Caco-2 (cell line): ENCODE measurements at regions of chr6 and their contacts with region 1.

Region 1: DNA sequence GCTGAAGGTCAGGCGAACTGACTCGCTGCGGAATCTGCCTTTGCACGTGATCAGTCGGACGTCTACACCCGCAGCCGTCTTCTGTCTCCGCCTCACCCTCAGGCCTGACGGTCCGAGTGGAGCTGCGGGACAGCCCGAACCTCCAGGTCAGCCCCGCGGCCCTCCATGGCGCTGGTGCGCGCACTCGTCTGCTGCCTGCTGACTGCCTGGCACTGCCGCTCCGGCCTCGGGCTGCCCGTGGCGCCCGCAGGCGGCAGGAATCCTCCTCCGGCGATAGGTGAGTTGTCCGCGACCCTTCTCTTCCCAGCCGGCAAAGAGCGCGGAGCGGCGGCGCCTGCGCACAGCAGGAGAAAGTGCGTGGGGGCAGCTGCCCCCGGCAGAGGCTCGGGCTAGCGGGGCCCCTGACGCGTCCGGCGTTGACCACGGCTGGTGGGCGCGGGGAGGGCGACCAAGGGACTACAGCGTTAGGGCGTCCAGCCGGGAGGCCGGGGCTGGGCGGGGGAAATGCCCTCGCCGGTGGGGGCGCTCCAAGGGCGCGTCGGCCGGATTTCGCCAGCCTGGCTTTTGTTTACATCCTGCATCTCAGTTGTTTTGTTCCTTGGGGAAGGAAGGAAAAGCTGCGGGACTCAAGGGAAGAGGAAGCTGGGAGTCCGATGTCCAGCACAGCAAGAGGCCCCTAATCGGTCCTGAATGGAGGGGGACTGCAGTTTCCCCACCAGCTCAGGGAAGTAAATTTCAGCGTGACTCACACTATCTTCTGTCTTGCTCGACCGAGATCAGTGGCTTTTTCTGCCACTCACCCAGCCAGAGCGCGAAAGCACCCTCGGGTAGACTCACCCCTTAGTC is at the start of gene SMPDL3A:
- DNase-seq: peak; percentile 78 to 84
- H3K4me3 ChIP-seq: peak within 1 kb of the TSS; percentile 73
- H3K4me3 Mint-ChIP-seq: peak within 1 kb of the TSS; percentile 96
- H3K27ac Mint-ChIP-seq: peak within 1 kb of the TSS; percentile 92
- H3K4me1 ChIP-seq: peaks cover 51% of the 10 kb centered on the region
- H3K4me1 Mint-ChIP-seq: peaks cover 30% of the 10 kb centered on the region
- H3K27me3 ChIP-seq: no peaks in the 10 kb centered on the region
- H3K27me3 Mint-ChIP-seq: no peaks in the 10 kb centered on the region
- CTCF ChIP-seq: peak; percentile 50 to 61
- total RNA-seq, gene SMPDL3A: 20.4 and 21.7 TPM in 2 replicates

Region 2: GRCh38 chr6:122530440-122531046 is 258.9 kb before region 1 on chr6:
- CTCF ChIA-PET with region 1: no interaction called
- POLR2A ChIA-PET with region 1: no interaction called
- intact Hi-C with region 1: no loop called
- DNase-seq: peak; percentile 38 to 66
- H3K4me3 ChIP-seq: no peak overlapping the region
- H3K4me3 Mint-ChIP-seq: no peak overlapping the region
- H3K27ac Mint-ChIP-seq: no peak overlapping the region
- H3K4me1 ChIP-seq: no peaks in the 10 kb centered on the region
- H3K4me1 Mint-ChIP-seq: no peaks in the 10 kb centered on the region
- H3K27me3 ChIP-seq: no peaks in the 10 kb centered on the region
- H3K27me3 Mint-ChIP-seq: peaks cover 5% of the 10 kb centered on the region
- CTCF ChIP-seq: peak; percentile 81 to 90

Region 3: GRCh38 chr6:122749451-122750050 is 39.9 kb before region 1 on chr6:
- CTCF ChIA-PET with region 1: no interaction called
- POLR2A ChIA-PET with region 1: no interaction called
- intact Hi-C with region 1: loop called (anchors 2 kb)
- DNase-seq: no peak
- H3K4me3 ChIP-seq: no peak overlapping the region
- H3K4me3 Mint-ChIP-seq: no peak overlapping the region
- H3K27ac Mint-ChIP-seq: no peak overlapping the region
- H3K4me1 ChIP-seq: peaks cover 16% of the 10 kb centered on the region
- H3K4me1 Mint-ChIP-seq: peaks cover 9% of the 10 kb centered on the region
- H3K27me3 ChIP-seq: no peaks in the 10 kb centered on the region
- H3K27me3 Mint-ChIP-seq: no peaks in the 10 kb centered on the region
- CTCF ChIP-seq: no peak

Region 4: GRCh38 chr6:122770835-122771601 is 18.4 kb before region 1 on chr6:
- CTCF ChIA-PET with region 1: interaction called, 21 read pairs
- POLR2A ChIA-PET with region 1: interaction called, 9 read pairs
- intact Hi-C with region 1: loop called (anchors 1 kb)
- DNase-seq: peak; percentile 50 to 59
- H3K4me3 ChIP-seq: no peak overlapping the region
- H3K4me3 Mint-ChIP-seq: peak overlapping the region; percentile 42
- H3K27ac Mint-ChIP-seq: peak overlapping the region; percentile 66
- H3K4me1 ChIP-seq: peaks cover 52% of the 10 kb centered on the region
- H3K4me1 Mint-ChIP-seq: peaks cover 40% of the 10 kb centered on the region
- H3K27me3 ChIP-seq: no peaks in the 10 kb centered on the region
- H3K27me3 Mint-ChIP-seq: no peaks in the 10 kb centered on the region
- CTCF ChIP-seq: peak; percentile 24 to 49

Region 5: GRCh38 chr6:122778985-122779661 is 10.3 kb before region 1 on chr6:
- CTCF ChIA-PET with region 1: no interaction called
- POLR2A ChIA-PET with region 1: no interaction called
- intact Hi-C with region 1: loop called (anchors 1 kb)
- DNase-seq: no peak
- H3K4me3 ChIP-seq: no peak overlapping the region
- H3K4me3 Mint-ChIP-seq: no peak overlapping the region
- H3K27ac Mint-ChIP-seq: no peak overlapping the region
- H3K4me1 ChIP-seq: peaks cover 10% of the 10 kb centered on the region; the same call in 1 of the 2 replicates
- H3K4me1 Mint-ChIP-seq: peaks cover 12% of the 10 kb centered on the region
- H3K27me3 ChIP-seq: no peaks in the 10 kb centered on the region
- H3K27me3 Mint-ChIP-seq: no peaks in the 10 kb centered on the region
- CTCF ChIP-seq: no peak

Region 6: DNA sequence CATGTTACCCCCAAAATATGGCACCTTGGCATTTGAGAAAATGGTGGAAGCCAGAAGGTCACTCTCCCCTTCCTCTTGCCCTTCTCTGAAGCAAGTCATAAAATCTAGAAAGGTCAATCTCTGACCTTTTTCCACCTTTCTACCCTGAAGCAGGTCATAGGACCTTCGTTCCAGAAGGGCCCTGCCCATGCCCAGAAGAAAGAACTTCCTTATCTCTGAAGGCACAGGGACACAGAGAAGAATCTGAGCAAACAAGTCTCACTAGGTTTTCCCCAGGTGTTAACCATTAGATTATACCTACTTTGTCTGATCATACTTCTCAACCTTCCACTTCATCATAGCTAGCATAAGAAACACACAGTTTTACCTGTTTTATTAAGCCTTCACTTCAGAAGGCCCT is 42.1 kb after region 1 on chr6:
- CTCF ChIA-PET with region 1: no interaction called
- POLR2A ChIA-PET with region 1: interaction called, 3 read pairs
- intact Hi-C with region 1: loop called (anchors 1 kb)
- DNase-seq: peak; percentile 36 to 47
- H3K4me3 ChIP-seq: no peak overlapping the region
- H3K4me3 Mint-ChIP-seq: no peak overlapping the region
- H3K27ac Mint-ChIP-seq: no peak overlapping the region
- H3K4me1 ChIP-seq: peaks cover 34% of the 10 kb centered on the region
- H3K4me1 Mint-ChIP-seq: peaks cover 19% of the 10 kb centered on the region
- H3K27me3 ChIP-seq: no peaks in the 10 kb centered on the region
- H3K27me3 Mint-ChIP-seq: no peaks in the 10 kb centered on the region
- CTCF ChIP-seq: no peak

Region 7: DNA sequence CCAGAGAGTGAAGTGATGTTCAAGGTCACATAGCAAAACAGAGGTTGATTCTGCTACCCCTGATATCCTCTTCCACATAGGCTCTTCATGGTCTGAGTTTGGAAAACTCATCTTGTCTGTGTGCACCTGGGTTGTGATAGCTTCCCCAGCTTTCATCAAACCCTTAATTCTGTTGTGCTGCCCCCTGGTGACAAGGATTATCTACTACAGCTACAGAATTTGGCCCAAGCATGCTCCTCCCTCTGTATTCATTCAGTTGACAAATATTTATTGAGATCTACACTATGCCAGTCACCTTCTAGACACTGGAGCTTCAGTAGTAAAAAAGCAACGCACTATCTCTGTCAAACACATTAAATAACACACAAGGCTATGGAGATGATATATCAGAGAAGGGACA is 50.1 kb after region 1 on chr6:
- CTCF ChIA-PET with region 1: interaction called, 31 read pairs
- POLR2A ChIA-PET with region 1: no interaction called
- intact Hi-C with region 1: loop called (anchors 1 kb)
- DNase-seq: peak; percentile 61 to 81
- H3K4me3 ChIP-seq: no peak overlapping the region
- H3K4me3 Mint-ChIP-seq: no peak overlapping the region
- H3K27ac Mint-ChIP-seq: no peak overlapping the region
- H3K4me1 ChIP-seq: peaks cover 9% of the 10 kb centered on the region
- H3K4me1 Mint-ChIP-seq: peaks cover 10% of the 10 kb centered on the region
- H3K27me3 ChIP-seq: no peaks in the 10 kb centered on the region
- H3K27me3 Mint-ChIP-seq: no peaks in the 10 kb centered on the region
- CTCF ChIP-seq: peak; percentile 58 to 68

Region 8: GRCh38 chr6:123263981-123264380 is 474.6 kb after region 1 on chr6:
- CTCF ChIA-PET with region 1: no interaction called
- POLR2A ChIA-PET with region 1: no interaction called
- intact Hi-C with region 1: no loop called
- DNase-seq: no peak
- H3K4me3 ChIP-seq: no peak overlapping the region
- H3K4me3 Mint-ChIP-seq: no peak overlapping the region
- H3K27ac Mint-ChIP-seq: no peak overlapping the region
- H3K4me1 ChIP-seq: no peaks in the 10 kb centered on the region
- H3K4me1 Mint-ChIP-seq: peaks cover 6% of the 10 kb centered on the region
- H3K27me3 ChIP-seq: no peaks in the 10 kb centered on the region
- H3K27me3 Mint-ChIP-seq: no peaks in the 10 kb centered on the region
- CTCF ChIP-seq: no peak